Left ventricle myocardium inferior (tissue), 1 donor: ENCODE measurements at regions of chr14 and their contacts with region 1.

Region 1: DNA sequence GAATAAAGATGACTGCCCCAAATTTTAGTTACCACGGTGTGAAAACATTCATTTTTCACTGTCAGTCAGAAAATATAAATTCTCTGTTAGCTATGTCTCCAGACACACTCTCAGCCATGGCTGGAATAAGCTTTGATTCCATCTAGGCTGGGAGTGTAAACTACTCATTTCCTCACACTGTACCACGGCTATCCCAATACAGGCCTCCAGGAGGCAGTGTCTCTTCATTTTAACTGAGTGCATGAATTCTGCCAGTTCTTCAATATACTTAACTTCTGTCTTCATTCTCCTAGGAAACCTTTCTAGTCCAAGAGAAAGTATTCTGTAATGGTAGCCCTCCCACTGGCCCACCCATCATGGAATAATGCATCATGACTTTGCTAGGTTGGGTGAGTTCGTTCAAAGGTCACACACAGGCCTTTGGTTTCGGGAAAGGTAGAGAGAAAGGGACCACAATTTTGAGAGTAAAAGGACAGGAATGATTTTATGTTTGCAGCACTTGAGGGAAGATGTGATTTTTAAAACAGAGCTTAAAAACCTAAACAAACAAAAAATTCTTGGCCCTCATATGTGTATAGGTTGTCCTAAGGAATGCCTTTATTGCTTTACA is 381.1 kb downstream of the SEC23A start:
- DNase-seq: peak; percentile 21
- H3K4me3 ChIP-seq: no peak overlapping the region
- H3K27ac ChIP-seq: no peak overlapping the region
- H3K4me1 ChIP-seq: no peaks in the 10 kb centered on the region
- H3K27me3 ChIP-seq: no peaks in the 10 kb centered on the region
- CTCF ChIP-seq: peak; percentile 80

Region 2: GRCh38 chr14:38867561-38868150 is 145.7 kb after region 1 on chr14:
- intact Hi-C with region 1: loop called (anchors 10 kb)
- DNase-seq: peak; percentile 41
- H3K4me3 ChIP-seq: no peak overlapping the region
- H3K27ac ChIP-seq: no peak overlapping the region
- H3K4me1 ChIP-seq: peaks cover 18% of the 10 kb centered on the region
- H3K27me3 ChIP-seq: no peaks in the 10 kb centered on the region
- CTCF ChIP-seq: peak; percentile 83

Region 3: DNA sequence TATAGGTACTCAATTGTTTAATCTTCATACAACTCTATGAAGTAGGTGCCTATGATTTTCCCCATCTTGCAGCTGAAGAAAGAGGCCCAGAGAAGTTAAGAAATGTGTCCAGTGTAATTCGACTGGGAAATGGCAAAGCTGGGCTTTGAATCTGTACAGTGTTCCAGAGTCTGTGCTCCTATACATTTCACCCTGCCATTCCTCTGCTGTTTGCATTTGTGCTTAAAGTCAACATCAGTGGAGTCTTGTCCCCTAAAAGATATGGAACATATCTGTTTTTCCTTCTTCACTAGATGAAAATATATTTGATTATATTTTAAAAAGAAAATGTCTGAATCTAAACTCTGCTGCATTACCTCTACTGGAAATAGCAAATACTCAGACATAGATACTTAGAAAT is 292.5 kb after region 1 on chr14:
- intact Hi-C with region 1: loop called (anchors 5 kb)
- DNase-seq: no peak
- H3K4me3 ChIP-seq: no peak overlapping the region
- H3K27ac ChIP-seq: no peak overlapping the region
- H3K4me1 ChIP-seq: no peaks in the 10 kb centered on the region
- H3K27me3 ChIP-seq: no peaks in the 10 kb centered on the region
- CTCF ChIP-seq: no peak